Mucosa of descending colon (tissue), 3 donors: ENCODE measurements at regions of chr12 and their contacts with region 1.

Region 1: DNA sequence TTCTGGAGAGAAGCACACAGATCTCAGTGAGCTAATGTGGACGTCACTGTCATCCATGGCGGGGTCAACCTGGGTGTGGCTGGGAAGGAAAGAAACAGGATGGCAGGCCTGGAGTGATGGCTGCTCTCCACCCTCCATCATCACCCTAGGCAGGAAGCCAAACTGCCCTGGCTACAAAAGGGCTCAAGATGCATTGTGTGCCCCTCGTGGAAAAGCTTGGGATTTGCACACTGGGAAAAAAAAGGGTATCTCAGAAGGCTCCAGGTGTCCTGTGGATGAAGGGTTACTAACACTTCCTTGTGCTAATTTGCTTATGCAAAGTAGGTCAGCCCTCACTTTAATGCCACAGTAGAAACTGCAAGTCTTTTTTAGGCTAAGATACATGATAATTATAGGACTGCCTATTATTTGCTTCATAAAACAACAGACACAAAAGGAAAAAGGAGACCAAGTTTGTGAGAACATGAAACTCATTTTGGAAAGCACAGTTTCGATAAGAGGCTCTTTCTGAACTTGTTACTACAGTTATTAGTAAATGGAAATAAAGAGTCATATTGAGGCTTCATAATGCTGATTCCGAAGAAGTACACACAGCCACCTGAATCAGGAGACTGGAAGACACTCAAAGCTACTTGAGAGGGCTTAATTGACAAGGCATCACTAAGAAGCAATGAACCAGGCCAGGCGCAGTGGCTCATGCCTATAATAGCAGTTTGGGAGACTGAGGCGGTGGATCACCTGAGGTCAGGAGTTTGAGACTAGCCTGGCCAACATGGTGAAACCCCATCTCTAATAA is 18.9 kb downstream of the RFC5 start:
- DNase-seq: no peak
- ATAC-seq: peak; percentile 56
- H3K4me3 ChIP-seq: no peak overlapping the region
- H3K4me1 ChIP-seq: no peaks in the 10 kb centered on the region
- CTCF ChIP-seq: no peak

Region 2: DNA sequence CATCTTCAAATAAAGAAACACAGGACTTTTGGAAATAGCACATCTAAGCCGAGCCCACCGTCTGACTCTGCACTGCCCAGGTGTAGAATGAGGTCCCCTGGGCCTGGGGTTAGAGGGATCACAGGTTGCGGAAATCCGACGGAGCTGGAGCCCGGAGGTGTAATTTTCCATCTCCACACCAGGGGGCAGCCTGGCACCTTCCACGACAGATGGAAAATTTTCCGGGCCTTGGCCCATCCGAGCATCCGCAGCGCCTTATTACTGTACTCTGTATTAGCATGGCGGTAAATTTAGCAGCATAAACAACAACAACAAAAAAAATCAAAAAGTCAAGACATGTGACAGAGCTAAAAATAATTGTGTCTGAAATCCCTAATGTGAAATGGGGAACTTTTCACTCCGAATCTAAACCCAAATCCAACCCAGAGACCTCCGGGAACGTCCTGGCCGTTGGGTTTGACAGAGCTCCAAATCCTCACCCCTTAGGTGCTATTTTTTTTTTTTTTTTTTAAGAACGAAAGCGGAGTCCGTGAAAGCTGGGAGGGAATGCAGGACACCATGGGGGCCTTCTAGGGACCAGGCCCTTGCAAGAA is 160.5 kb before region 1 on chr12:
- intact Hi-C with region 1: loop called (anchors 10 kb)
- DNase-seq: peak; percentile 58 to 81 (median 78)
- ATAC-seq: peak; percentile 94
- H3K4me3 ChIP-seq: no peak overlapping the region
- H3K4me1 ChIP-seq: no peaks in the 10 kb centered on the region
- CTCF ChIP-seq: peak; percentile 76